Caco-2 (cell line): ENCODE measurements at regions of chr5 and their contacts with region 1.

Region 1: DNA sequence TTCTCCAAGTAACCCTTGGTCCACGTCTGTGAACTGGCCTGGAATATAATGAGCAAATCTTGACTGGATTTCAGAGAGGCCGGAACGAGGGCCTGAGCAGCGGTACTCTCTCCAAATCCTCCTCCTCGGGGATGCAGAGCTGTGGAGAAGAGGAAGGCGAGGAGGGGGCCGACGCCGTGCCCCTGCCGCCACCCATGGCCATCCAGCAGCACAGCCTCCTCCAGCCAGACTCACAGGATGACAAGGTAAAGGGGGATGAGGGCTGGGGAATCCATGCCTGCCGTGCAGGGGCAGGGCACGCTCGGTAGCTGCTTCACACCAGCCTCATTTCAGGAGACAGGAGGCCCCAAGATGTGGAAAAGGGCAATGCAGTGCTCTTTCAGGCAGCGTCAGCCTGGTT is 118.9 kb upstream of the OTULINL start:
- DNase-seq: no peak
- H3K4me3 ChIP-seq: no peak overlapping the region
- H3K4me3 Mint-ChIP-seq: no peak overlapping the region
- H3K27ac Mint-ChIP-seq: no peak overlapping the region
- H3K4me1 ChIP-seq: peaks cover 5% of the 10 kb centered on the region; the same call in 1 of the 2 replicates
- H3K4me1 Mint-ChIP-seq: peaks cover 27% of the 10 kb centered on the region
- H3K27me3 ChIP-seq: no peaks in the 10 kb centered on the region
- H3K27me3 Mint-ChIP-seq: no peaks in the 10 kb centered on the region
- CTCF ChIP-seq: no peak

Region 2: DNA sequence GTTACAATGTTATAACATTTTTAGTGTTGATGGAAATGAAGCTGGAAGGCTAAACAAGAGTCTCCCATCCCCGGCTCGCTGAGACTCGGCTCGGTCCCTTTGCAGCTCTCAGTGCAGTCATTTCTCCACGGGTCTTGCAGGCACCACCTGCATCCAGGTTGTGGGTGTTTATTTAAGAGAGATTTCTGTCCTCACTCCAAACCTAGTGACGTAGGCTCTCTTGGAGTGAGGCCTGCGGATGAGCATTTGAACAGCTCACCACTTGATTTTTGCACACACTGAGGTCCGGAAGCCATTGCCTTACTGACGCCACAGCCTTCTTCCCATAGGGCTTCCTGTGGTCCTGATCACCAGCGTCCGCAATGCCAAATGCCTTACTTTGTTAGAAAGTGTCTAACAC is 78.8 kb before region 1 on chr5:
- CTCF ChIA-PET with region 1: no interaction called
- POLR2A ChIA-PET with region 1: no interaction called
- intact Hi-C with region 1: no loop called
- DNase-seq: no peak
- H3K4me3 ChIP-seq: no peak overlapping the region
- H3K4me3 Mint-ChIP-seq: no peak overlapping the region
- H3K27ac Mint-ChIP-seq: peak overlapping the region; percentile 20
- H3K4me1 ChIP-seq: no peaks in the 10 kb centered on the region
- H3K4me1 Mint-ChIP-seq: no peaks in the 10 kb centered on the region
- H3K27me3 ChIP-seq: no peaks in the 10 kb centered on the region
- H3K27me3 Mint-ChIP-seq: no peaks in the 10 kb centered on the region
- CTCF ChIP-seq: no peak

Region 3: DNA sequence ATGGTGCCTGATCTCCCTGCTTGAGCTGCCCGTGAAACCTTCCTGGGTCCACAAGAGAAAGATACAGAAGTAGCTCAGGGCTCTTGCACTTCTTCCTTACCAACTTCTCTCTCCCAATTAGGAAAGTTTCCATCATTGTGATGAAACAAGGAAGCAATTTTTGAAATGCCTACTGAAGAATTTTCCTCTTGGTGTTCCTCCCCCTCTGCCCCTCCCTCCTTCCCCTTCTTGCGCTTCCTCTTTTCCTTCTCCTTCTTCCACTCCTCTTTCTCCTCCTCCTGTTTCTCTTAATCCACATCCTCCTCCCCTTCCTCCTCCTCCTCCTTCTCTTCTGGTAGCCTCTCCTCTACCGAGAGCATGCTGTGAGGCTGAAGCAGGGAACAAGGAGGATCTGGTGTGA is 82.6 kb after region 1 on chr5:
- CTCF ChIA-PET with region 1: no interaction called
- POLR2A ChIA-PET with region 1: interaction called, 13 read pairs
- intact Hi-C with region 1: no loop called
- DNase-seq: peak in 1 of 2 experiments; percentile 6
- H3K4me3 ChIP-seq: no peak overlapping the region
- H3K4me3 Mint-ChIP-seq: no peak overlapping the region
- H3K27ac Mint-ChIP-seq: no peak overlapping the region
- H3K4me1 ChIP-seq: peaks cover 2% of the 10 kb centered on the region
- H3K4me1 Mint-ChIP-seq: peaks cover 5% of the 10 kb centered on the region
- H3K27me3 ChIP-seq: no peaks in the 10 kb centered on the region
- H3K27me3 Mint-ChIP-seq: no peaks in the 10 kb centered on the region
- CTCF ChIP-seq: no peak